ENCODE measurements at regions of chr16 and their contacts with region 1.

Region 1: DNA sequence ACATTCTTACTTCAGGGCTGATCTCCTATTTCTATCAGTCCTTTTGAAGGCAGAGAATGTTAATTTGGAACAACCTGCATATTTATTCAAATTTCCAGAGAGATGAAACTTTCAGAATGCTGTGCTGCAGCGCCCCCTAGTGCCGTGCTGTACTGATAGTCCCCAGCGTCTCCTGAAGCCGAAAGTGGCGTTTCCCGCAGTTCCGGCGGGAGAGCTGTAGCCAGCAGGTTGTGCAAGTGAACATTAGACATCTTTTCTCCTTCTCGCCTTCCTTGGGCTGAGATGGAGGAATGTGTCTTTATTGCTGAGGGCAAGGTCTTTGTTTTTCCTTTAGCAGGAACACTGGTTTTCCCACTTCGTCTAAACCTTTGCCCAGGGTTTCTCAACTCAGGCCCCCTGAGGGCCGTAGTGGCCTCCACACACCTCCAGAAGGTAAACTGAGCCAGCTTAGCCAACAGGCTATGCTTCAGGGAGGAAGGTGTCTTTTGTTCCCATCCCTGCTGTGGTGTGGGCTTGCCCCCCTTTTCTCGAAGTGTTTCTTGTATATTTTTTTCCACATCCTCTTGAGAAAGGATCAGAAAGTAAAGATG is 26.4 kb downstream of the USP10 start:
- DNase-seq: peak; percentile 58 to 85
- ATAC-seq: peak; percentile 84 to 86
- H3K4me3 ChIP-seq: 0 out of 3 replicates have a peak overlapping the region, but pooled peaks have one; percentile 20
- H3K27ac ChIP-seq: peak overlapping the region; percentile 50 to 92
- H3K4me1 ChIP-seq: peaks cover 69% of the 10 kb centered on the region
- CTCF ChIP-seq: peak; percentile 97
- EP300 ChIP-seq: no peak
- POLR2A ChIP-seq: no peak
- RAD21 ChIP-seq: peak; percentile 83 to 88

Region 2: DNA sequence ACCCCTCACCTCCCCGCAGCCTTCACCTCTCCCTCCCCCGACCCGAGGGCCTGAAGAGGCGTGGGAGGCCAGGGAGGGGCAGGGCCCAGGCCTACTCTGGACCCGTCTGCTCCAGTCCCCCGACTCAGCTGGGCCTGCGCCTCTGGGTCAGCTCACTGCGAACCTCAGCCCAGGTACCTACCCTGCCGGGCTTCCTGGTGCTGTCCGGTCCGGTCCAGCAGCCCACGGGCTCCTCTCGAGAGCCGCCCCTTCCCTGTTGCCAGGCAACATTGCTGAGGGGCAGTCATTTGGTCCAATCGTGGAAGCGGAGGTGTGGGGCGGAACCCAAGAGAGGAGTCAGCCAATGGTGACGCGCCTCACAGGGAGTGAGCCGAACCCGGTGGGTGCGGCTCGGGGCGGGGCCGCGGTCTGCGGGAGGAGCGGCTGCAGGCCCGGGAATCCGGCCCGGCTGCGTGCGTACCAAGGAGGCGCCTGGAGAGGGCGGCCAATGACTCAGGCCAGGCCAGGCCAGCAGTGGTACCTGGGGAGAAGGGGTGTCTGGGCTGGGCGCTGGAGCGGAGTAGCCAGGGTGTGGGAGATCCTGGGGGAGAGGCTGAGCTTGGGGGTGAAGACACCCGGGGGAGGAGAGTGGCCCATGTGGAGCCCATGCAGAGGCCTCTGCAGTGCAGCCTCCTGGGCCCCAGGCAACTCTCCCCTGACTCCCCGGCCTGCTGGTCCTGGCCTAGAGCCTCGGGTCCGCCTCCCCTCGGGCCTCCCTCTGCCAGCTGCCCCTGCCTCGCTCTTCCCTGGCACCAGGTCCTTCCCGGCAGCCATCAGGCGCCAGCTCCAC is 221.5 kb before region 1 on chr16 and contains the start of gene MEAK7:
- CTCF ChIA-PET with region 1: interaction called, 22 read pairs
- POLR2A ChIA-PET with region 1: no interaction called
- DNase-seq: peak; percentile 98
- ATAC-seq: peak; percentile 89 to 94
- H3K4me3 ChIP-seq: peak within 1 kb of the TSS; percentile 74
- H3K27ac ChIP-seq: peak within 1 kb of the TSS; percentile 95 to 96
- H3K4me1 ChIP-seq: peaks cover 58% of the 10 kb centered on the region
- CTCF ChIP-seq: no peak
- EP300 ChIP-seq: no peak
- POLR2A ChIP-seq: peak; percentile 81
- RAD21 ChIP-seq: no peak
- polyA plus RNA-seq, gene MEAK7: 26.2 and 31.3 TPM in 2 replicates

Region 3: GRCh38 chr16:84526794-84527503 is 199.2 kb before region 1 on chr16:
- CTCF ChIA-PET with region 1: interaction called, 13 read pairs
- POLR2A ChIA-PET with region 1: no interaction called
- DNase-seq: no peak
- ATAC-seq: no peak
- H3K4me3 ChIP-seq: no peak overlapping the region
- H3K27ac ChIP-seq: 0 out of 6 replicates have a peak overlapping the region, but pooled peaks of 1 of the 2 experiments have one; percentile 12
- H3K4me1 ChIP-seq: peaks cover 7% of the 10 kb centered on the region
- CTCF ChIP-seq: no peak
- EP300 ChIP-seq: no peak
- POLR2A ChIP-seq: no peak
- RAD21 ChIP-seq: no peak

Region 4: DNA sequence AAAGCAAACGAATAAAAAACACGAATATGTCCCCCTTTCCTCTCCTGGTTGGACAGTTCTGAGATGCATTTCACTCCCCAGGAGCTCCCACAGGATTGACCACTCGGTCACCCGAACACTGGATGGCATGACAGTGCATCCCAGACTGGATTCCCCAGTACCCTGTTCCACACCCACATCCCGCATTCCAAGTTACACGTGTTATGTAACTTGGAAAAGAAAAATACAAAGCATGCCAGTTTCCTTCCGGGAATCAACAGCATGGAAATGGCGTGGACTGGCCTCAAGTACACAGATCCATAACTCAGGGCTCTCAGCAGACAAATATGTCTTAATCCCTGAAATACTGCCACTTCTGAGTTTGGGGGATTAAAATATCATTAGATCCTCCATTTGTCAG is 90.5 kb before region 1 on chr16:
- CTCF ChIA-PET with region 1: interaction called, 10 read pairs
- POLR2A ChIA-PET with region 1: no interaction called
- DNase-seq: no peak
- ATAC-seq: no peak
- H3K4me3 ChIP-seq: no peak overlapping the region
- H3K27ac ChIP-seq: no peak overlapping the region
- H3K4me1 ChIP-seq: no peaks in the 10 kb centered on the region
- CTCF ChIP-seq: no peak
- EP300 ChIP-seq: no peak
- POLR2A ChIP-seq: no peak
- RAD21 ChIP-seq: no peak

Region 5: GRCh38 chr16:84663433-84664101 is 62.6 kb before region 1 on chr16:
- CTCF ChIA-PET with region 1: interaction called, 138 read pairs
- POLR2A ChIA-PET with region 1: no interaction called
- DNase-seq: no peak
- ATAC-seq: no peak
- H3K4me3 ChIP-seq: no peak overlapping the region
- H3K27ac ChIP-seq: no peak overlapping the region
- H3K4me1 ChIP-seq: no peaks in the 10 kb centered on the region
- CTCF ChIP-seq: no peak
- EP300 ChIP-seq: no peak
- POLR2A ChIP-seq: no peak
- RAD21 ChIP-seq: no peak

Region 6: DNA sequence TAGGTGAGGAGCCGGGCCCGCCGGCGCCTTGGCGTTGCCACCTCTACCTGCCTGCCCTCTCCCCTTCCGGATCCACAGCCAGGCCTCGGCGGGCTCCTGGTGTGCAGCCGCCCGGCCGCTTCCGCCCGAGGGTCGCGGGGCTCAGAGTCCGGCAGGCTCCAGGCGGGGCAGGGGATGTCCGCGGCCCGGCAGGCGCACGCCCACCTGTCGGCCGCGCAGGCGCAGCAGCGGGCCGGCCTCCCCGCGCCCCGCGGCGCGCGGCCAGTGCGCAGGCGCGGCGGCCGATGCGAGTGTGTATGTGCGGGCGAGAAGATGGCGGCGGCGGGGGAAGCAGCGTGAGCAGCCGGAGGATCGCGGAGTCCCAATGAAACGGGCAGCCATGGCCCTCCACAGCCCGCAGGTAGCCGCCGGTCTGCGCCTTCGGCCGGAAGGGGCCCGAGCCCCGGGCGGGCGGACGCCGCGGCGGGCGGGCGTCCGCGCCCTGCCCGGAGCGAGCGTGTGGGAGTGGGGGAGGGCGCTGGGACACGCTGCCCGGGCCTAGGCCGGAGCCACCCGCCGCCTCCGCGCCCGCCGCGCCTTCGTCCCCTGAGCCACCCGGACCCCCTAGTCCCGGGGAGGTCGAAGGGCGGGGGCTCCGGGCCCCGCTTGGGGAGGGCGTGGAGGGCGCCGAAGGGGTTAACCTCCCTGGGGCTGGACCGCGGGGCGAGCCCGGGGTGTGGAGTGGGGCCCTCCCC is 26.3 kb before region 1 on chr16 and contains the start of gene USP10:
- CTCF ChIA-PET with region 1: interaction called, 40 read pairs
- POLR2A ChIA-PET with region 1: interaction called, 4 read pairs
- DNase-seq: peak; percentile 81 to 88
- ATAC-seq: peak; percentile 89 to 95
- H3K4me3 ChIP-seq: peak within 1 kb of the TSS; percentile 100
- H3K27ac ChIP-seq: peak within 1 kb of the TSS; percentile 95 to 99
- H3K4me1 ChIP-seq: peaks cover 30% of the 10 kb centered on the region
- CTCF ChIP-seq: no peak
- EP300 ChIP-seq: no peak
- POLR2A ChIP-seq: peak; percentile 80
- RAD21 ChIP-seq: no peak
- polyA plus RNA-seq, gene USP10: 93.5 and 144 TPM in 2 replicates

Region 7: DNA sequence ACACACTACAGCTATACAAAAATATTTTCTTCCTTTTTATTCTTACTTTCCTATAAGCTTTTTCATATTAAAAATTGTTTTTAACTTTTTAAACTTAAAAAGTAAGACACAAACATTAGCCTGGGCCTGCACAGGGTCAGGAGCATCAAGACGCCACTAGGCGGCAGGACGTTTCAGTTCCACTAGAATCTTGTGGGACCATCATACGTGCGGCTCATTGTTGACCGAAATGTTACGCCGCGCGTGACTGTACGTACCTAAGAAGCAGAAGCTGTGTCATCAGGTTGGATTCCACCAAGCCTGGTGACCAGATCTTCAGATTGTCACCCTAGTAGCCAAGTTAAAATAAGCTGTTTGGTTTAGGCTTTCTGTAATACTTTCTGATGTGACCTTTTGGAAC is 20.7 kb after region 1 on chr16:
- CTCF ChIA-PET with region 1: interaction called, 202 read pairs
- POLR2A ChIA-PET with region 1: no interaction called
- DNase-seq: peak in 1 of 2 experiments; percentile 45
- ATAC-seq: peak; percentile 66 to 82; a peak in 4 of 6 replicates
- H3K4me3 ChIP-seq: no peak overlapping the region
- H3K27ac ChIP-seq: no peak overlapping the region
- H3K4me1 ChIP-seq: peaks cover 10% of the 10 kb centered on the region; the same call in 2 of the 3 replicates
- CTCF ChIP-seq: peak; percentile 29; the same call in 2 of the 3 replicates
- EP300 ChIP-seq: no peak
- POLR2A ChIP-seq: no peak
- RAD21 ChIP-seq: no peak

Region 8: GRCh38 chr16:84907575-84907974 is 181.4 kb after region 1 on chr16:
- CTCF ChIA-PET with region 1: no interaction called
- POLR2A ChIA-PET with region 1: no interaction called
- DNase-seq: no peak
- ATAC-seq: no peak
- H3K4me3 ChIP-seq: no peak overlapping the region
- H3K27ac ChIP-seq: no peak overlapping the region
- H3K4me1 ChIP-seq: no peaks in the 10 kb centered on the region
- CTCF ChIP-seq: no peak
- EP300 ChIP-seq: no peak
- POLR2A ChIP-seq: no peak
- RAD21 ChIP-seq: no peak